ENCODE measurements at regions of chr6 and their contacts with region 1.

Region 1: GRCh38 chr6:87589693-87590549 is at the starts of genes ORC3 and RARS2:
- DNase-seq: peak; percentile 96
- H3K4me3 Mint-ChIP-seq: peak within 1 kb of the TSS; percentile 90
- H3K27ac Mint-ChIP-seq: peak within 1 kb of the TSS; percentile 79
- H3K4me1 Mint-ChIP-seq: peaks cover 42% of the 10 kb centered on the region
- H3K27me3 Mint-ChIP-seq: no peaks in the 10 kb centered on the region
- total RNA-seq, gene ORC3: 34.7 and 38.6 TPM in 2 replicates
- total RNA-seq, gene RARS2: 24.6 and 24.7 TPM in 2 replicates

Region 2: DNA sequence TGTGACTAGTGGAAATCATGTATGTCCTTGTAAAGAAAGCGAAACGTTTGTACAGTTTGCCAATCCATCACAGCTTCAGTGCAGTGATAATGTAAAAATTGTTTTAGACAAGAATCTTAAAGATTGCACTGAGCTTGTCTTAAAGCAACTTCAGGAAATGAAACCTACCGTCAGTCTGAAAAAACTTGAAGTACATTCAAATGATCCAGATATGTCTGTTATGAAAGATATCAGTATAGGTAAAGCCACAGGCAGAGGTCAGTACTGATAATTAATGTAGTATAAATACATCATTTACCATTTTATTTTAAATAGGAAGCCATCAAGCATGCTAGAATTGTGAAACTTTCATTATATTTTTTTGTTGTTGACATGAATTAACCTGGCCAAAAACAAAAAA is 328.4 kb before region 1 on chr6:
- intact Hi-C with region 1: loop called (anchors 10 kb)
- DNase-seq: no peak
- H3K4me3 Mint-ChIP-seq: no peak overlapping the region
- H3K27ac Mint-ChIP-seq: no peak overlapping the region
- H3K4me1 Mint-ChIP-seq: peaks cover 12% of the 10 kb centered on the region
- H3K27me3 Mint-ChIP-seq: no peaks in the 10 kb centered on the region

Region 3: DNA sequence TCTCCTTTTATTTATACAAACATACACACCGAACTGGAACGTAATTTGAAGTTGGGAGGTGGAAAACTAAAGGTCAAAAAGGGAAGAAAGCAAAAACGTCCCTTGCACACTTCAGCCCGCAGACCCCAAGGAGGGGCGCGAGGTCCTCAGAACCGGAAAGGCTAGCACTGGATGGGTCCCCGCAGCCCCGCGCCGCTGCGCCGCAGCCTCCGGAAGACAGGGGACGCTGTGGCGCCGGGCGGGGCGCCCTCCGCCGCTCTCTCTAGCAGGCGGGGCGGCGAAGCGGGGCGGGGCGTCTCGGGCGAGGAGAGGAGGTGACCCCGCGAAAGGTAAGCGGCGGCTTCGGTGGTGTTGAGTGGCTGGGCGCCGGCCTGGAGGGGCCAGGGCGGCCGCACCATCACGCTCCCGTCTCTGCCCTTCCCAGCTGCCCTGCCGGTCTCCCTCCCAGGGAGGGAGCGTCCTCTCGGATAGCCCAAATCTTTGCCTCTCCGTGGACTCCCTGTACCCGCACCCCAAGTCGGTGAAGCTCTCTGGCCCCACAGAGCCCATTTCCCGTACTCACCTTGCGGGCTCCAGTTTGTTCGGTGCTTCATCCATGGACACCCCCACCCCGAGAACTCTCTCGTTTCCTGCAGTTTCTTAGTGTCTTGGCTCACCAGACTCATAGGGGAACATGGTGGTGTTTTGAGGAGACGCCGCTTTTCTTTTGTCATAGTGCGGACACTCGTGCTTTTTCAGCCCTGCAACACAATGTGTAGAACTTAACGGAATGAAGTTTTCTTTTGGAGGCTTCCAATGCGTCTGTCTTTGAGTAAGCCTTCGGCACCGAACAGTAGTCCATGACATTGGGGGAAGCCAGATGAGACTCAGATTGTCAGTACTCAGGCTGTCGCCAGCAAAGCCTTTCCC is 267.4 kb before region 1 on chr6 and contains the start of gene SMIM8:
- intact Hi-C with region 1: loop called (anchors 1 kb)
- DNase-seq: peak; percentile 84
- H3K4me3 Mint-ChIP-seq: peak within 1 kb of the TSS; percentile 99
- H3K27ac Mint-ChIP-seq: peak within 1 kb of the TSS; percentile 92
- H3K4me1 Mint-ChIP-seq: peaks cover 8% of the 10 kb centered on the region
- H3K27me3 Mint-ChIP-seq: peaks cover 3% of the 10 kb centered on the region
- total RNA-seq, gene SMIM8: 7.3 and 9.2 TPM in 2 replicates

Region 4: DNA sequence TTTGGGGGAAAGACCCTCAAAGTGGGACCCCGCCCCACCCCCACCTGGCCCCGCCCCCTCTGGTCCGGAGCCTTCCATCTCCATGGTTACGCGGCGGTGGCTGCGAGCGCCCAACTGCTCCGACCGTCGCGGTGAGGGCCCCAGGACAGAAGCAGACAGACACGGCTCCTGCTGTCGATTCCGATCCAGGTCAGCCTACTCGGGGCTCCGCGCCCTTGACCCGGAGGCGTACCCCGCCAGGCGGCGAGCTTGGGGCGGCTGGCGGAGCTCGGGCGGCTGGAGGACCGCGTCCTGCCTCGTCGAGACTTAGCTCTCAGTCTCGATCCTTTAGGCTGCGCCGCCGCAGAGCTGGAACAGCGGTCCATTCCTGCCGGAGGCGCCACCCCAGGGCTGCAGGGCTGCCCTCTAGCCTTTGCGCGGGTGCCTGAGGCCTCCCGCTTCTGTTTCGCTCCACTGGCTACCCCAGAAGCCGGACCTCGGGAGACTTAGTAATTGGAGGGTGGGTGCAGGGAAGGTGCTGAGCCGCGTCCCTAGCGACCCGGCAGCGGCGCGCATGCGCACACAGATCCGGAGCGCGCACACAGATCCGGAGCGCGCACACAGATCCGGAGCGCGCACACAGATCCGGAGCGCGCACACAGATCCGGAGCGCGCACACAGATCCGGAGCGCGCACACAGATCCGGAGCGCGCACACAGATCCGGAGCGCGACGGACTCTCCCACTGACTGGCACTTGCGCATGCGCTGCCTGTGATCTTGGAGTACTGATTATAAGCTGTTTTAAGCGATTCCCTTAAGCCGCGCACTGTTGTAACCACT is 181.8 kb before region 1 on chr6 and contains the start of gene CFAP206:
- intact Hi-C with region 1: loop called (anchors 1 kb)
- DNase-seq: peak; percentile 66
- H3K4me3 Mint-ChIP-seq: peak within 1 kb of the TSS; percentile 84
- H3K27ac Mint-ChIP-seq: peak within 1 kb of the TSS; percentile 76
- H3K4me1 Mint-ChIP-seq: peaks cover 16% of the 10 kb centered on the region
- H3K27me3 Mint-ChIP-seq: peaks cover 28% of the 10 kb centered on the region
- total RNA-seq, gene CFAP206: 0.20 TPM in 1 of 2 replicates, not detected in the other

Region 5: GRCh38 chr6:87472525-87473418 is 117.1 kb before region 1 on chr6 and contains the start of gene SLC35A1:
- intact Hi-C with region 1: loop called (anchors 1 kb)
- DNase-seq: peak; percentile 77
- H3K4me3 Mint-ChIP-seq: peak within 1 kb of the TSS; percentile 98
- H3K27ac Mint-ChIP-seq: peak within 1 kb of the TSS; percentile 97
- H3K4me1 Mint-ChIP-seq: peaks cover 14% of the 10 kb centered on the region
- H3K27me3 Mint-ChIP-seq: peaks cover 7% of the 10 kb centered on the region
- total RNA-seq, gene SLC35A1: 9.7 and 10.2 TPM in 2 replicates

Region 6: DNA sequence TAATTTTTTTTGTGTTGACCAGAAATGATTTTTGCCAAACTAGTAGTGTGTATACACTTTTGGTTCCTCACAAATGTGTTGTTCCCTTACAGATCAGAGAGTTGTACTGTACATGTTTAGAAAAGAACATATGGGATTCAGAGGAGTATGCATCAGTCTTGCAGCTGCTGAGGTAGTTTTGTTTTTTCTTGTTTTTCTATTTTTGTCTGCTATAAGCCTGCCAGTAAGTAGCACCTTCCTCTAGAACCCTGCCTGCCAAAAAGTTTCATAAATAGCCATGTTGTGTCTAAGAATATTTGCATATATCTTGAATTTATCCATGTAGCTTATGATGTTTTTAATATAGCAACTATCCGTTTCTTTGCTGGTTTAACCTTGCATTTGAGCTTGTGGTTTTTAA is 46.4 kb after region 1 on chr6:
- intact Hi-C with region 1: no loop called
- DNase-seq: no peak
- H3K4me3 Mint-ChIP-seq: no peak overlapping the region
- H3K27ac Mint-ChIP-seq: no peak overlapping the region
- H3K4me1 Mint-ChIP-seq: peaks cover 8% of the 10 kb centered on the region
- H3K27me3 Mint-ChIP-seq: no peaks in the 10 kb centered on the region

Region 7: GRCh38 chr6:87653074-87653962 is 63.4 kb after region 1 on chr6:
- intact Hi-C with region 1: loop called (anchors 5 kb)
- DNase-seq: no peak
- H3K4me3 Mint-ChIP-seq: peak overlapping the region; percentile 53
- H3K27ac Mint-ChIP-seq: peak overlapping the region; percentile 87
- H3K4me1 Mint-ChIP-seq: peaks cover 38% of the 10 kb centered on the region
- H3K27me3 Mint-ChIP-seq: no peaks in the 10 kb centered on the region

Region 8: DNA sequence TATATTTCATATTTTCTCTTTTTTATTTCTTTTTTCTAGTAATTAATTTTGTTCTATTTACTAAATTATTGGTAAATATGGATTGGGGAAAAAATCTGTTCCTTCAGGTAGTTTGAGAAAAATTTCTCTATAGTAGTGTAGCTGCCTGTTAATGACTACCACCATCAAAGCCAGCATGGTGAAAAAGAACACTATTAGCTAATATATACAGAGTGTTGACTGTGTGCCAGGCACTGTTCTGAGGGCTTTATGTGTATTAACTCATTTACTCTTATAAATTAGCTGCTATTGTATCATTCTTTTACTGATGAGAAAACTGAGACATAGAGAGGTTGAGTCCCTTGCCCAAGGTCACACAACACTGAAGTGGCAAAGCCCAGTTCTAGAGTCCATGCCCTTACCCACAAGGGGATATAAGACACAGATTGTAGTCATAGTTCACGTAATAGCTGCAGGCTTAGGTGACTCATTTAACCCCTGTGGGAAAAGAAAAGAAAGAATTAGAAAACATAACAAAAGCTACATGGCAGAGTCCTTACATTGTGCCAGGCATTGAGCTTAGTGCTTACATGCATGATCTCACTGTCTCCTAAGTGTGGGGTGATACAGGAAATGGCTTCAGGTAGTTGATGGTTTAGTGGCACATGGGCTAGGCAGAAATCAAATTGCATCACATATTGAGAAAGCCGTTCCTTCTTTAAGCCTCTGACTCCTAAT is 124.3 kb after region 1 on chr6:
- intact Hi-C with region 1: no loop called
- DNase-seq: no peak
- H3K4me3 Mint-ChIP-seq: no peak overlapping the region
- H3K27ac Mint-ChIP-seq: no peak overlapping the region
- H3K4me1 Mint-ChIP-seq: peaks cover 13% of the 10 kb centered on the region
- H3K27me3 Mint-ChIP-seq: no peaks in the 10 kb centered on the region

Region 9: GRCh38 chr6:87742106-87742505 is 152.2 kb after region 1 on chr6:
- intact Hi-C with region 1: loop called (anchors 1 kb)
- DNase-seq: peak; percentile 43
- H3K4me3 Mint-ChIP-seq: no peak overlapping the region
- H3K27ac Mint-ChIP-seq: peak overlapping the region; percentile 27
- H3K4me1 Mint-ChIP-seq: peaks cover 43% of the 10 kb centered on the region
- H3K27me3 Mint-ChIP-seq: peaks cover 2% of the 10 kb centered on the region

Region 10: DNA sequence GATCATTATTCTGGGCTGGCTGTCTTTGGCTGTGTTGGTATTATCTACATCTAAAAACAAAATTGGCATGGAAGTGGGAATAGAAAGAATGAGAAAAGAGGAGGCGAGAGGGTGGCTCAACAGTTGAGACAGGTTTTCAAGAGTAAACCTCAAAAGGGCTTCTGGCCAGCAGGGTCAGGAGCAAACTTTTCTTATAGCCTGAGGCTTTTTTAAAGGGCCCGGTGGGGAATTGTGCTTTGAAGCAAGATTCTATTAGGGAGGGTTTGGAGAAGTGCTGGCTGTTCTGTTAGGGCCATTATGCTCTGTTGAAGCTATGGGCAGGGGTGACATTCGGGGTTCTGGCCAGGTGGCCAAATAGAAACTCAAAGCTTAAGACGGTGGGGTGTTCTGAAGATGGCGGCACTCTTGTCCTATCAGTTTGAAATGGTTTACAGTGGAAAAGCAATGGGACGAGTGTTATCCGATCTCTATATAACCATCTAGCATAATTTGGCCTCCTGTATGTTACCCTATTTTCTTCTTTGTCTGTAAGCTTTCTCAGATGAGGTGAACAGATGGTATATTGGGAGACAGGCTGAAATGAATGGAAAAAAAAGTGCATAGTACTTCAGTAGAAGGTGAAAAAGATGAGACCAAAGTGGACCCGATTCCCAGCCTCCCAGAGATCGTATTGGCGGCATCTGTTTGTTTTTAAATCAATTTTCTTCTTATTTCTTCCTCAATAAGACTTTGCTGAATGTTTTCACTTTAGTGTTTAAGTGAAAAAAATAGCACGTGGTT is 708.3 kb after region 1 on chr6:
- intact Hi-C with region 1: no loop called
- DNase-seq: no peak
- H3K4me3 Mint-ChIP-seq: no peak overlapping the region
- H3K27ac Mint-ChIP-seq: no peak overlapping the region
- H3K4me1 Mint-ChIP-seq: no peaks in the 10 kb centered on the region
- H3K27me3 Mint-ChIP-seq: peaks cover 2% of the 10 kb centered on the region

Measured in activated T-helper 1 cell treated with anti-CD3 and anti-CD28 coated beads, Interleukin-12 subunit alpha, Interleukin-12 subunit beta, Interleukin-2, Interleukin-4 antibody, amounts not matched to agents 30 ng/mL and 10 ng/mL and 1 ng/mL, durations not matched to agents 14 hours and 24 hours and 36 hours (primary cell).